GM10248 (cell line): ENCODE measurements at regions of chr18 and their contacts with region 1.

Region 1: DNA sequence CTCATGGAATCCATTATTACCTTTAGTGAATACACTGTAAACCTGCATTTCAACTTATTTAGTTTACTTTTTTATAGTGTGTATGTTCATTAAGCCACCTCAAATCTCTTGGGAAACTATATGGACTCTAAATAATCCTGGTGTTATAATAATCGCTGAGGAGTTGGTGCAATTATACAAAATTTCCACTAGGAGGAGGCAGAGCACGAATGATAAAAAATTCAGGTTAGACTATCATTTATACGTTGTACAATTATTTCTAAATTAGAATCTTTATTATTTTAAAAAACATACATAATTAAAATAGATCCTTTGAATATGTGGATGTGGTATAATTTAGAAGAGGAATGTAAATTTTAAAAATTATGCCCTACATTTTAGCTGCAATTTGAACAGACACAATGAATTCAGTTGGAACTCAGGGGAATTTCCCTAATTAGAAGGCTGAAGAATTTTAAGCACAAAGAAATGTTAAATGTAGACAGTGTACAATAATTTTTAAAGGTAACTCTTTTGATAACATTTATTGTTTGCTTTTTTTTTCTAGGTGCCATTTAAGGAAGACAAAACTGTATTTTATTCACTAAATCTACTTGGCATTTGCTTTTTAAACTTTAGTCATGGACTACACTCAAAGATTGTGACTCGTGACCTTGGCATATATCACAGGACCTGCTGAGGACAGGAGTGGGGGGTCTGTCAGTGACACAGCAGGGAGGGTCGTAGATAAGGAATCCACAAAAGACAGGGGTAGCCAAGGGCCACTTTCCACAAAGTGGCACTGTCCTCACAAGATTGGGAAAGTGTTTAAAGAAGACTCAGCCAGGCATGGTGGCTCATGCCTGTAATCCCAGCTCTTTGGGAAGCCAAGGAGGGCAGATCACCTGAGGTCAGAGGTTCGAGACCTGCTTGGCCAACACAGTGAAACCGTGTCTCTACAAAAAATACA is 45.5 kb downstream of the RAB12 start:
- DNase-seq: peak; percentile 39
- CTCF ChIP-seq: peak; percentile 66

Region 2: DNA sequence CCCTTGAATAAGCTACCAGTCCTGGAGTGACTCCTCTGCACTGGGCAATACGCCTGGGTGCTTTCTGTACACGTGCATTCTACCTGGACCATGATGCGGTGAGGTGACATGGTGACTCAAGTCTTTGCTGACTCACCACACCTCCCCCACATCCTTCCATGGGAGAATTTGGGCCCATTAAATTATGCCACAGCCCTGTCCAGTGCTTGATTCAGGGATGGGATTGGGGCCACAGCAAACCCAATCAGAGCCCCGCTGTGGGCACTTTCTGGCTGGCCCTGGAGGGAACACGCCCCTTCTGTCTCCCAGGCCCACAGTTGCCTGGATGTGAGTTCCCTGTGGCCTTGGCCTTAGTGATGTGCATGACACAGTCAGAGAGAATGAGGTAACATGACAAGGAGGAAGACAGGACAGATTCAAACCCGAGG is 1337.0 kb before region 1 on chr18:
- CTCF ChIA-PET with region 1: no interaction called
- POLR2A ChIA-PET with region 1: no interaction called
- DNase-seq: no peak
- CTCF ChIP-seq: no peak

Region 3: DNA sequence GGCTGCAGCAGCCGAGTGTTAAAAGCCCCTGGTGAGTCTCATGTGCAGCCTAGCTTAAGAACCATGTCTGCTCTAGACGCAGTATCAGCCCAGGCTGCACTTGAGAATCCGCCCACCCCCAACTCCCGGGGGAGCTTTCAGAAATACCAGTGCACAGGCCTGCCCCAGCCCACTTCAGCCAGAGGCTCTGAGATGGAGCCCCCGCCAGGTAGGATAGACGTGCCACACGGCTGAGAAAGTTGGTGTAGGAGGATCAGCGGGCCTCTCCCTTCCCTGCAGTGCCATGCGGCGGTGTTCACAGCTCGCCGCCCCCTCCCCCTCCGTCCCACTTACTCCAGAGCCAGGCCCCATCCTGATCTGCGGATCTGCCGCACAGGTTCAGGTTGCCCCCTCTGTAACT is 254.5 kb before region 1 on chr18:
- CTCF ChIA-PET with region 1: no interaction called
- POLR2A ChIA-PET with region 1: no interaction called
- DNase-seq: no peak
- CTCF ChIP-seq: no peak

Region 4: DNA sequence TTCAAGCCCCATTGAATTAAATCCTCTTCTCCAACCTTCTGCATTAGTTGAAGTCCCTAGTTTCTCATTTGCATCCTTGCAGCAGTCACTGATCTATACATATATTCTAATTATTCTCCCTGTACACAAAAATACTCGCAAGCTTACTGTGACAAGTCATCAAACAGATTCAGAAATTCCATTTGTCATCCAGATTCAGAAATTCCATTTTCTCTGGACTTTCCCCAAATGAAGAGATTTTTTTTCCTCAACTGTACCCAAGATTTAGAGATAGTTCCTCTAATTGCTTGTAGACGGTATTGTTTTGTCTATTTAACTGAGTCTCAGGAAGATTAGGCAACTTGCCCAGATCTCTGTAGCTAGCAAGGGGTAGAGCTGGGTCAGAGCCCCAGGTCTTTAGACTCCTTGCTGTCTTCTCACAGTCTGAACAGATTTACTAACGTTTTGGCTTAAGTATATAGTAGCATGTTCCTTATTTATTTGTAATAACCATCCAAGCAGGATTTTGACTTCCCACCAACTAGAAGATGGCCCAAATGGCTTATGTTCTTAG is 11.4 kb before region 1 on chr18:
- CTCF ChIA-PET with region 1: interaction called, 94 read pairs
- POLR2A ChIA-PET with region 1: no interaction called
- DNase-seq: no peak
- CTCF ChIP-seq: no peak

Region 5: GRCh38 chr18:8673256-8674209 is 18.8 kb after region 1 on chr18:
- CTCF ChIA-PET with region 1: interaction called, 10 read pairs
- POLR2A ChIA-PET with region 1: no interaction called
- DNase-seq: peak; percentile 52
- CTCF ChIP-seq: no peak

Region 6: DNA sequence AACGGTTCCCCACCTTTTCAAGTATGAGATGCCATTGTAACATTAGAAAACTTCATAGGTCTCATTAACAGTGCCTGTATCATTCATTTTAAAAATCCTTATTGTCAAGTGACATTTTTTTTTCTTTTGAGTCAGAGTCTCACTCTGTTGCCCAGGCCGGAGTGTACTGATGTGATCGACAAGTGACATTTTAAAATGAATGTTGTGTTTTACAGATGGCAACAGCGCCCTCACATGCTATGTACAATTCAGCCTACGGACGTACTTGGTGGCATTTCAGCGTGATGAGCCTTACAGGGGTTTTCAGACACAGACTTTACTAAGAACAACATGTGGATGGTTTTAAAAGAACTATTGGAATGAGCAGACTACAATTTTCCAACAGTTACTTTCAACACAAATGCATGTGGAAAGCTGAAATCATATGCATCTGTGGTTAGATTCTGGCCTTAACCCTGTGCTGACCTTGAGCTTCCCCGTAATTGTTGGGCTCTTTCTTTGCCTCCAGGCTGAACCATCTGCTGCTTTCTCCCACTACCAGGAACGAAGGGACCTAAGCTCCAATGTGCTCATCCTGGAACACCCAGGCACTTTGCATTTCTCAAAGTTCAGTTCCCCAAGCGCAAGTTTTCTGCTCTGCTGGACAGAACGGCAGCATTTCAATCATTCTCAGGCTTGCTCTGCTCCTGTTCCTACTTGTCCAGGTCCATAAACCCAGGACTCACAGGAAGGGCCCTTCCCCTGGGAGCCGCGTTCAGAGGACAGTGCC is 327.8 kb after region 1 on chr18:
- CTCF ChIA-PET with region 1: interaction called, 48 read pairs
- POLR2A ChIA-PET with region 1: no interaction called
- DNase-seq: no peak
- CTCF ChIP-seq: peak; percentile 34

Region 7: GRCh38 chr18:8988261-8988871 is 333.6 kb after region 1 on chr18:
- CTCF ChIA-PET with region 1: interaction called, 48 read pairs
- POLR2A ChIA-PET with region 1: no interaction called
- DNase-seq: peak; percentile 74
- CTCF ChIP-seq: peak; percentile 80

Region 8: GRCh38 chr18:9233771-9234440 is 579.1 kb after region 1 on chr18:
- CTCF ChIA-PET with region 1: no interaction called
- POLR2A ChIA-PET with region 1: no interaction called
- DNase-seq: no peak
- CTCF ChIP-seq: no peak